Natural killer cell (primary cell): ENCODE measurements at regions of chr6 and their contacts with region 1.

Region 1: DNA sequence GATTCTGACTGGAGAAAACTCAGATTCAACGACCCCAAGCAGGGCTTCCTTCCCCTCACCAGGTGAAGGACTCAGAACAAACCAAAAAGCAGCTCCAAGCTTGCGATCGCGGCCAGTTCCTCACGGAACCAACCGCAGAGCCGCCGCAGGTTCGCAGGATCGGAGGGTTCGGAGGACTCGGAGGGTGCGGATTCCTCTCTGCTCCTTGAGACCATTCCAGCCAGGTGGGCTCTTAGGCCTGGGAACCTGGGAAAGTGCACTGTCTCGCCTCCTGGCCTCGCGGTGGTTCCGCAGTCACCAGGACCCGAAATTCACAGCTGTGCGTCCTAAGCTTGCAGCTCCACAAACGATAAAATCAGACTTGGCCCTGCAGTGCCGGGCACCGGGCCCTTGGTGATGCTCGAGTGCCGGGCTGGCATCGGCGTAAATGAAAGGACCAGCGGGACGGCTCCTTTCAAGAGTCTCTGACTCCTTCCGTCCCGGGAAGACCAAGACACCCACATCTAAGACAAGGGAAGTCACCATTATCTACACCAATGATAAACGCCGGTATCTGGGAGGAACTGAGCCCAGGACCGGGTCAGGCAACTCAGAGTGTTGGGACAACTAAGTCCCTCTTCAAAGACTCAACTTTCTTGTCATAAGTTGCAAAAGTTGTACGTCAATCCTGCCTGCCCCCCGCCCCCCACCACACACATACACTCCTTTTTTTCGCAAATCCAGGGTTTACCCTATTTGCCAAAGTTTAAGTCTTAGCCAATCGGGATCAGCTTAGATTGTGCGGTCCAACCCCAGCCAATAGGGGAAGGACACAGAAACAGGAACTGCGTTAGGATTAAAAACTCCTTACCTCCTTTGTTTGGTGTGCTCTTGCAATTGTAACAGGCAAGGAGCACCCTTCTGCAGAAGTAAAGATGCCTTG is 69.8 kb upstream of the PRSS16 start:
- DNase-seq: peak; percentile 70 to 86
- ATAC-seq: peak; percentile 79 to 88 (median 83)
- H3K4me3 ChIP-seq: peak overlapping the region; percentile 81
- H3K4me3 Mint-ChIP-seq: peak overlapping the region; percentile 95
- H3K27ac ChIP-seq: peak overlapping the region; percentile 66
- H3K27ac Mint-ChIP-seq: peak overlapping the region; percentile 92 to 98
- H3K4me1 ChIP-seq: peaks cover 13% of the 10 kb centered on the region
- H3K4me1 Mint-ChIP-seq: peaks cover 25 to 26% of the 10 kb centered on the region in 2 donors
- H3K27me3 ChIP-seq: no peaks in the 10 kb centered on the region
- H3K27me3 Mint-ChIP-seq: peaks cover 0 to 9% of the 10 kb centered on the region in 2 donors
- CTCF ChIP-seq: peak; percentile 59

Region 2: GRCh38 chr6:27059621-27060425 is 117.9 kb before region 1 on chr6:
- intact Hi-C with region 1: no loop called
- DNase-seq: no peak
- ATAC-seq: no peak
- H3K4me3 ChIP-seq: no peak overlapping the region
- H3K4me3 Mint-ChIP-seq: no peak overlapping the region
- H3K27ac ChIP-seq: no peak overlapping the region
- H3K27ac Mint-ChIP-seq: no peak overlapping the region
- H3K4me1 ChIP-seq: no peaks in the 10 kb centered on the region
- H3K4me1 Mint-ChIP-seq: no peaks in the 10 kb centered on the region
- H3K27me3 ChIP-seq: peaks cover 5% of the 10 kb centered on the region
- H3K27me3 Mint-ChIP-seq: peaks cover 30 to 51% of the 10 kb centered on the region in 2 donors
- CTCF ChIP-seq: no peak

Region 3: GRCh38 chr6:27503436-27504030 is 325.8 kb after region 1 on chr6:
- intact Hi-C with region 1: loop called (anchors 10 kb)
- DNase-seq: peak; percentile 80 to 90
- ATAC-seq: peak; percentile 60 to 72 (median 67)
- H3K4me3 ChIP-seq: peak overlapping the region; percentile 71
- H3K4me3 Mint-ChIP-seq: peak overlapping the region; percentile 91
- H3K27ac ChIP-seq: peak overlapping the region; percentile 61
- H3K27ac Mint-ChIP-seq: peak overlapping the region; percentile 92 to 94
- H3K4me1 ChIP-seq: peaks cover 11% of the 10 kb centered on the region
- H3K4me1 Mint-ChIP-seq: peaks cover 22 to 33% of the 10 kb centered on the region in 2 donors
- H3K27me3 ChIP-seq: peaks cover 12% of the 10 kb centered on the region
- H3K27me3 Mint-ChIP-seq: peaks cover 17 to 22% of the 10 kb centered on the region in 2 donors
- CTCF ChIP-seq: no peak